Ovary (tissue), 10 donors: ENCODE measurements at regions of chr1 and their contacts with region 1.

Region 1: GRCh38 chr1:220680085-220680687 is 10.0 kb upstream of the C1orf115 start:
- DNase-seq: no peak
- H3K4me3 ChIP-seq: no peak overlapping the region
- H3K27ac ChIP-seq: no peak overlapping the region
- H3K4me1 ChIP-seq: no peaks in the 10 kb centered on the region
- H3K27me3 ChIP-seq: no peaks in the 10 kb centered on the region
- CTCF ChIP-seq: peak; percentile 44 to 60 (median 59)
- EP300 ChIP-seq: no peak
- POLR2A ChIP-seq: no peak

Region 2: GRCh38 chr1:220579317-220579716 is 100.9 kb before region 1 on chr1:
- intact Hi-C with region 1: no loop called
- DNase-seq: no peak
- H3K4me3 ChIP-seq: no peak overlapping the region
- H3K27ac ChIP-seq: no peak overlapping the region
- H3K4me1 ChIP-seq: no peaks in the 10 kb centered on the region
- H3K27me3 ChIP-seq: no peaks in the 10 kb centered on the region
- CTCF ChIP-seq: no peak
- EP300 ChIP-seq: no peak
- POLR2A ChIP-seq: no peak

Region 3: DNA sequence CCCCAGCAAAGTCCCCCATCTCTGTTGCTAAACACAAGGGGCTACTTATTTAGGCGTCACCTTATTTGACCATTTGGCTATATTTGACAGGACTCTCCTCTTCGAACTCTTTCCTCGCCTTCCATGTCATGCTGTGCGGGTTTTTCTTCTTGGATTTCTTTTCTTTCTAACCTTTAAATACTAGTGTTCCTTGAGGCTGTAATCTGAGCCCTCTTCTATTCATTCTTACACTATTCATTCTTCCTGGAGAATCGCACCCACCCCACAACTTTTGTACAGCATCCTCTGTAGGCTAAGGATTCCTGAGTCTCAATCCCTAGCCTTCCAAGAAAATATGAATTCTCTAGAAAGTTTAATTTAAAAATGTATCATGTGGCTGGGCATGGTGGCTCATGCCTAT is 51.8 kb before region 1 on chr1:
- intact Hi-C with region 1: no loop called
- DNase-seq: no peak
- H3K4me3 ChIP-seq: no peak overlapping the region
- H3K27ac ChIP-seq: no peak overlapping the region
- H3K4me1 ChIP-seq: no peaks in the 10 kb centered on the region
- H3K27me3 ChIP-seq: no peaks in the 10 kb centered on the region
- CTCF ChIP-seq: no peak
- EP300 ChIP-seq: no peak
- POLR2A ChIP-seq: no peak

Region 4: GRCh38 chr1:220784751-220785150 is 104.6 kb after region 1 on chr1:
- intact Hi-C with region 1: loop called in 1 of 4 experiments (anchors 5 kb)
- DNase-seq: no peak
- H3K4me3 ChIP-seq: no peak overlapping the region
- H3K27ac ChIP-seq: no peak overlapping the region
- H3K4me1 ChIP-seq: peaks cover 8% of the 10 kb centered on the region
- H3K27me3 ChIP-seq: no peaks in the 10 kb centered on the region
- CTCF ChIP-seq: no peak
- EP300 ChIP-seq: no peak
- POLR2A ChIP-seq: no peak

Region 5: GRCh38 chr1:221097479-221098383 is 417.5 kb after region 1 on chr1:
- intact Hi-C with region 1: no loop called
- DNase-seq: no peak
- H3K4me3 ChIP-seq: no peak overlapping the region
- H3K27ac ChIP-seq: no peak overlapping the region
- H3K4me1 ChIP-seq: no peaks in the 10 kb centered on the region
- H3K27me3 ChIP-seq: no peaks in the 10 kb centered on the region
- CTCF ChIP-seq: no peak
- EP300 ChIP-seq: no peak
- POLR2A ChIP-seq: no peak